MCF 10A (cell line): ENCODE measurements at regions of chr4 and their contacts with region 1.

Region 1: GRCh38 chr4:26349496-26349895 is 28.7 kb downstream of the RBPJ start:
- DNase-seq: no peak
- H3K4me3 Mint-ChIP-seq: no peak overlapping the region
- H3K27ac Mint-ChIP-seq: no peak overlapping the region
- H3K4me1 Mint-ChIP-seq: peaks cover 9% of the 10 kb centered on the region
- H3K27me3 Mint-ChIP-seq: no peaks in the 10 kb centered on the region
- CTCF ChIP-seq: no peak

Region 2: DNA sequence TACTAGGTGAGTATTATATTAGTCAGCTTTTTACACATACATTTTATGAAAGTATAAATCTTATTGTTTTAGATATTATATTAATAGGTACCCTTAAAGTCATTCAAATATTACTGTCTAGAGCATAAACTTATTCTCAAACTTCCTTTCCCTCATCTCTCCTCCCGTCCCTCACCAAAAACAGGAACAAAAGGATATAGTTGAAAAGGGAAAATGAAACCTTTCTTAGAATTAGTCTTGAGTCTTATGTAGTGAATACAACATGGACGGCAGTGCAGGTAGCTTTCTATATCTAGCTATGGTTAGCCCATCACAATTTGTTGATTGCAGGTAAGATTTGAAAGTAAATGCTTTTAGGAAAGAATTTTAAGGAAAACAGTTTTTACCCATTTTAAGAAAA is 36.9 kb after region 1 on chr4:
- CTCF ChIA-PET with region 1: no interaction called
- POLR2A ChIA-PET with region 1: no interaction called
- intact Hi-C with region 1: loop called (anchors 1 kb)
- DNase-seq: no peak
- H3K4me3 Mint-ChIP-seq: no peak overlapping the region
- H3K27ac Mint-ChIP-seq: no peak overlapping the region
- H3K4me1 Mint-ChIP-seq: peaks cover 9% of the 10 kb centered on the region
- H3K27me3 Mint-ChIP-seq: no peaks in the 10 kb centered on the region
- CTCF ChIP-seq: no peak